IMR-90 (cell line): ENCODE measurements at regions of chr3 and their contacts with region 1.

Region 1: DNA sequence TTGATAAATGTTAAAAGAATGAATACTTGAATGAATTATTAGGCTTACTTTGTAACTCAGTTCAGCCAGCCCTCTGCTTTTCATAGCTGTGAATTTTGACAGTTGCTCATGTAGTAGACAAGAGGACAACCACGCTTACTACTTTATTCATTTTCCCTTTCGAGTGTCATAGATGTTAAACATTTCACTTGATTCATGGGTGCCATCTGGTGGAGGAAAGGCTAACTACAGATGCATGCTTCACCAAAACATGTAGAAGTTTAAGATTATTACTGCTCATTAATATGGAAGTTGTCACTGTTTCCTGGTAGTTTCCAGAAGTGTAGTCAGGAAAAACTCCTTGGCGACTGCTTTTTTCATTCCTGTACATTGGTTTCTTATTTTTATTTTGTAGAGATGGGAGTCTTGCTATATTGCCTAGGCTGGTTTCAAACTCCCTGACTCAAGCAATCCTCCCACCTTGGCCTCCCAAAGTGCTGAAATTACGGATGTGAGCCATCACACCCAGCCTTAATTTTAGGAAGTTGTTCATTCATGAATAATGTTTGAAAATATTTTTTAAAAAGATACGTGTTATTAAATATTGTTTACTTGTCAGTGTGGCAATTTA is 163.2 kb downstream of the B3GALNT1 start:
- DNase-seq: peak; percentile 61
- ATAC-seq: peak; percentile 84
- H3K4me3 ChIP-seq: no peak overlapping the region
- H3K27ac ChIP-seq: no peak overlapping the region
- H3K4me1 ChIP-seq: no peaks in the 10 kb centered on the region
- H3K27me3 ChIP-seq: no peaks in the 10 kb centered on the region
- CTCF ChIP-seq: peak; percentile 79
- POLR2A ChIP-seq: no peak
- RAD21 ChIP-seq: peak; percentile 73

Region 2: GRCh38 chr3:160643994-160644393 is 298.0 kb before region 1 on chr3:
- CTCF ChIA-PET with region 1: no interaction called
- POLR2A ChIA-PET with region 1: no interaction called
- dilution Hi-C with region 1: no loop called
- in situ Hi-C with region 1: no loop called
- intact Hi-C with region 1: loop called (anchors 2 kb)
- DNase-seq: peak; percentile 17
- ATAC-seq: peak; percentile 37; the same call in 1 of the 2 replicates
- H3K4me3 ChIP-seq: no peak overlapping the region
- H3K27ac ChIP-seq: no peak overlapping the region
- H3K4me1 ChIP-seq: no peaks in the 10 kb centered on the region
- H3K27me3 ChIP-seq: no peaks in the 10 kb centered on the region
- CTCF ChIP-seq: peak; percentile 26; the same call in 1 of the 2 replicates
- POLR2A ChIP-seq: no peak
- RAD21 ChIP-seq: peak; percentile 32

Region 3: GRCh38 chr3:160707187-160707794 is 234.7 kb before region 1 on chr3:
- CTCF ChIA-PET with region 1: no interaction called
- POLR2A ChIA-PET with region 1: no interaction called
- dilution Hi-C with region 1: no loop called
- in situ Hi-C with region 1: loop called (anchors 10 kb)
- intact Hi-C with region 1: loop called (anchors 1 kb)
- DNase-seq: peak; percentile 50
- ATAC-seq: peak; percentile 89
- H3K4me3 ChIP-seq: no peak overlapping the region
- H3K27ac ChIP-seq: no peak overlapping the region
- H3K4me1 ChIP-seq: peaks cover 3% of the 10 kb centered on the region; the same call in 1 of the 2 replicates
- H3K27me3 ChIP-seq: peaks cover 6% of the 10 kb centered on the region
- CTCF ChIP-seq: peak; percentile 51
- POLR2A ChIP-seq: no peak
- RAD21 ChIP-seq: peak; percentile 60

Region 4: GRCh38 chr3:161220850-161221753 is 279.1 kb after region 1 on chr3 and contains the start of gene NMD3:
- CTCF ChIA-PET with region 1: no interaction called
- POLR2A ChIA-PET with region 1: no interaction called
- dilution Hi-C with region 1: no loop called
- in situ Hi-C with region 1: no loop called
- intact Hi-C with region 1: loop called (anchors 10 kb)
- DNase-seq: peak; percentile 92
- ATAC-seq: peak; percentile 97
- H3K4me3 ChIP-seq: peak within 1 kb of the TSS; percentile 71
- H3K27ac ChIP-seq: peak within 1 kb of the TSS; percentile 91
- H3K4me1 ChIP-seq: peaks cover 2% of the 10 kb centered on the region; the same call in 1 of the 2 replicates
- H3K27me3 ChIP-seq: no peaks in the 10 kb centered on the region
- CTCF ChIP-seq: no peak
- POLR2A ChIP-seq: peak; percentile 91
- RAD21 ChIP-seq: no peak
- total RNA-seq, gene NMD3: 95.0 and 103 TPM in 2 replicates

Region 5: GRCh38 chr3:161423911-161424522 is 482.0 kb after region 1 on chr3:
- CTCF ChIA-PET with region 1: no interaction called
- POLR2A ChIA-PET with region 1: no interaction called
- dilution Hi-C with region 1: no loop called
- in situ Hi-C with region 1: loop called (anchors 25 kb)
- intact Hi-C with region 1: loop called (anchors 5 kb)
- DNase-seq: peak; percentile 42
- ATAC-seq: peak; percentile 52
- H3K4me3 ChIP-seq: no peak overlapping the region
- H3K27ac ChIP-seq: no peak overlapping the region
- H3K4me1 ChIP-seq: peaks cover 7% of the 10 kb centered on the region
- H3K27me3 ChIP-seq: no peaks in the 10 kb centered on the region
- CTCF ChIP-seq: peak; percentile 81
- POLR2A ChIP-seq: no peak
- RAD21 ChIP-seq: peak; percentile 82